Kidney (tissue), 22 donors: ENCODE measurements at regions of chr15 and their contacts with region 1.

Region 1: DNA sequence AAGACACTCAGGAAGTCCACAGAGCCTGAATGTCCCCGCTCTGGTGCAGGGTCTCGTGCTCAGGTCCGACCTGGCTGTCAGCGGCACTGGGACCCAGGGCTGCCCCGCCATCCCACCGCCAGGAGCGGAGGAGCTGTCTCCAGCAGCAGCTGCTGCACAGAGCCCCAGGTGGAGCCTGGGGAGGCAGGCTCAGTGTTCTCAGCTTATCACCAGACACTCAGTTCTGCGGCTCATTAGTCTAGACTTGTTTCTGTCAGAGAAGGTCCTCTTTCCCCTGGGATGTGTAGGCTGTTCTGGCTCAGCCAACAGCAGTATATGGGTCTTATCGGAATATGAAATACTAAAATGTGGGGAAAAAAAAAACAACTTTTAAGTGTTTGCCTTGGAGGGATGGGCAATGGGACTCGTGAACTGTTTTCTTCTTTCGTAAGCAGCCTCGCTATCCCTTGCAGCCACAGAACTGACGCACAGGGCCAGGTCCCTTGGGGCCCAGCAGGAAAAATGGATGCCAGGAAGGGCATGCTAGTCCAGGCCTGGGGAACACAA is 75.9 kb downstream of the KLF13 start:
- DNase-seq: peak in 4 of 5 donors; percentile 51 to 89 (median 62)
- H3K4me3 ChIP-seq: no peak overlapping the region
- H3K27ac ChIP-seq: peak overlapping the region in 1 of 2 donors; percentile 72
- H3K4me1 ChIP-seq: peaks cover 0 to 20% (median 7%) of the 10 kb centered on the region in 3 donors
- H3K27me3 ChIP-seq: no peaks in the 10 kb centered on the region
- CTCF ChIP-seq: no peak

Region 2: DNA sequence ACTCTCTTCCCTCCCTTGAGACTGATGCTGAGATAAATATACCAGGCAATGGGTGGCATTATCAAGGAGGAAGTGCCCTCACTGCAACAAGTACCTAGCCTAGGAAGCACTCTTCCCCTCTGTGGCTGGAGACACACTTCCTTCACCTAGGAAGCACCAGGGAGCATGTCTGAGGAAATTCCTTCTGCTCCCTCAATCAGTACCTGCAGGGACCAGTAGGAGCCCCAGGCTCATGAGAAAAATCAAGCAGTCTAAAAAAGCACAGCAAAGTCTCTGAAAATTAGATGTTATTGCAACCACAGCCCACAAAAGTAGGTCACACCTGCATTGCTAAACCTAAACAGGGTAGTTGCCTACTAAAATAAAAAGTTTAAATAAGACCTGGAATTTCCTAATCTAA is 222.9 kb before region 1 on chr15:
- intact Hi-C with region 1: no loop called
- DNase-seq: no peak
- H3K4me3 ChIP-seq: no peak overlapping the region
- H3K27ac ChIP-seq: no peak overlapping the region
- H3K4me1 ChIP-seq: no peaks in the 10 kb centered on the region
- H3K27me3 ChIP-seq: no peaks in the 10 kb centered on the region
- CTCF ChIP-seq: no peak

Region 3: DNA sequence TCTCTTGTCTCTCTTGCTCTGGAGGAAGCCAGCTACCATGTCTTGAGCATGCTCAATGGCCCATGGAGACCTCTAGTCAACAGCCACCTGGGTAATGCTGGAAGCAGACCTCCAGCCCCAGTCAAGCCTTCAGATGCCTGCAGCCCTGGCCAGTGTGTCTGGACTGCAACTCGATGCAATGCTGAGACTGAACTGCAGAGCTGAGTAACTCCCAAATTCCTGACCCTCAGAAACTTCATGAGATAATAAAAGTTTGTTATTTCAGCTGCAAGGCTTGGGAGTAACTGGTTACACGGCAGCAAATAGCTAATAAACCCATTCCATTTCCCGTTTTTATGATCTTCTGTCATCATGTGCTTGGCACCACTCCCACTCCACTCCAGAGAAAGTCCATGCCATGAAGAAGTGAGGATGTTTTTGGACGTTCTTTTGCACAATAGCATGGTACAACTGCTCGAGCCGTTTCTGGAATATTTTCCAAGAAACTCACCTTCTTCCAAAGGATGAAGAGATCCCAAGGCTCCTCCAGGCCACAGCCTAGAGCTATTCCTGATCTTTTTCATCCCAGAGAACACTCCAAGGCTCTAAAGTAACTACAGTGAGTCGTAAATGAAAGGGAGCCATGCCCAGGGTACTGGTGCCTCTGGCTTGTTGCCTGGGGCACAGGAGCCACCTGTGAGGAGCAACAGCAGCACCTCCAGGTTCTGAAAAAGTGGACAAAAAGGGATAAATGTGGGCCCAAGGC is 148.0 kb before region 1 on chr15:
- intact Hi-C with region 1: no loop called
- DNase-seq: peak in 4 of 5 donors; percentile 43 to 81 (median 70)
- H3K4me3 ChIP-seq: no peak overlapping the region
- H3K27ac ChIP-seq: no peak overlapping the region
- H3K4me1 ChIP-seq: no peaks in the 10 kb centered on the region
- H3K27me3 ChIP-seq: no peaks in the 10 kb centered on the region
- CTCF ChIP-seq: no peak

Region 4: GRCh38 chr15:31285772-31286261 is 116.8 kb before region 1 on chr15:
- intact Hi-C with region 1: no loop called
- DNase-seq: no peak
- H3K4me3 ChIP-seq: no peak overlapping the region
- H3K27ac ChIP-seq: peak overlapping the region in 1 of 2 donors; percentile 7
- H3K4me1 ChIP-seq: peaks cover 0 to 2% (median 0%) of the 10 kb centered on the region in 3 donors
- H3K27me3 ChIP-seq: no peaks in the 10 kb centered on the region
- CTCF ChIP-seq: no peak

Region 5: DNA sequence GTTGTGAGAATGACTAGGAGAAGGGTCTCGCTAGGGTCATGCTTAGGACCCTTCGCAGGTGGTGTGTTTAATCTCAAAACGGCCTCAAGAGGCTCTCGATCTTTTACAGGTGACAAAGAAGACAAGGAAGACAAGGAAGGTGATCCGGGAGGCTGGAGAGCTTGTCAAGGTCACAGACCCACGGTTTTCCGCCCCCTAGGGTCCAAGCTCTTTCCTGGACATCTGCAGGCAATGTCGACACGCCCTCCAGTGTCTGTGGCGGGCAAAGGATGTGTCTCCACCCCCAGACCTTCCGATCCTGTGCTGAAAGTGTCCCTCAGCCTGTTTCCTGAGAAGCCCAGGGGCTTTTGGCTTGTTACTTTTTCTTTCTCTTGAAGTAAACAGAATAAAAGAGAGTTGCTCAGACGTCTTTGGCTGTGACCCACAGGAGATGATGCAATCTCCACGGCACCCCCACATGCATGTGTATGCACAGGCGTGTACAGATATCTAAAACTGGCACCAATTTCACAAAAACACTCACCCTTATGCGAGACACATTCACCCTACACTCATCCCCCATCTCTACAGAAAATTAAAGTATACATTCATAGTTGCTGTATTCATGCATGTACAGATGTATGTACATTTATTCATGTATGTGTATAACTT is 32.8 kb after region 1 on chr15:
- intact Hi-C with region 1: loop called (anchors 5 kb)
- DNase-seq: peak; percentile 84 to 91 (median 85)
- H3K4me3 ChIP-seq: peak overlapping the region; percentile 6 to 23 (median 14)
- H3K27ac ChIP-seq: peak overlapping the region; percentile 26 to 34
- H3K4me1 ChIP-seq: peaks cover 0 to 7% (median under 1%) of the 10 kb centered on the region in 3 donors
- H3K27me3 ChIP-seq: no peaks in the 10 kb centered on the region
- CTCF ChIP-seq: peak; percentile 59